Panc1 (cell line): ENCODE measurements at regions of chr17 and their contacts with region 1.

Region 1: DNA sequence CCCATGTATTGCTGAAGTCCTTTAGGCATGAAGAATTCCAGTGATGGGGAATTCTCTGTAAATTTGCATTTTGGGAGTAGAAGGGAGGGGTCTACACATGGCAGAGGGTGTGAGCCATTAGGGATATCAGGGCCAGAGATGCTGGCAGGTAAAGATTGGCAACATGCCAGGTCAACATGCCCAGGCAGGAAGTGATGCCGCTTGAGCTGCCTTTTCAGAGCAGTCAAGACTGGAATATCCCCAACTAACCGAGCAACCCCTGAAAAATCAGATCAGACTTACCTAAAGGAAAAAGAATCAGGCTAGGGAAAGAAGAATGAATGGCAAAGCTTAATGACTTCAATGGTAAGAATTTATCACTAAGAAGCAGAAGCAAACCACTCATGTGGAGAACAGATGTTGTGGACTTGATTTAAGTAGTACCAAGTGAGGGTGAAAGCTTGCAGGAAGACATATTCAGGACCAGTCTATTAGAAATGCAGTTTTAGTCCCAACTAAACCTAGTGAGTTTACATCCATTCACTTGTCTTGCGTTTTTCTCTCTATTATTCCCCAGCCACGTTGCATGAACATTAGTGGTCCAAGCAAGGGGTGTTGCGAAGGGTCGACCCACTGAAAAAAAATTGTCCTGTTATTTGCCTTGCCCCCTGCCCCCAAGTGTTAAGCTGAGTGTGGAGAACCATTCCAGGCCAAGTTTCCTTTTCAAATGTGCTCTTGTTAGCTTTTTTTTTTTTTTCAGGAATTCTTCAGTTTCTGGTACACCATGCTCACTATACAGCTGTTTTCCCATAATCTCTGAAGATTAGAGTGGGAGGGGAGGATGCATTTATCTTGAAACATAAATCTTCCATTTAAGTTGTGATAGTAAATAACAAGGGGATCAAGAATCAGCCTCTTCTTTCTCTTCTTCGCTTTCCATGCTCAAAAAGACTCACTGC is 105.2 kb downstream of the ABCA8 start:
- DNase-seq: no peak
- ATAC-seq: no peak
- H3K4me3 ChIP-seq: no peak overlapping the region
- H3K27ac ChIP-seq: no peak overlapping the region
- H3K4me1 ChIP-seq: no peaks in the 10 kb centered on the region
- H3K27me3 ChIP-seq: no peaks in the 10 kb centered on the region
- CTCF ChIP-seq: no peak

Region 2: DNA sequence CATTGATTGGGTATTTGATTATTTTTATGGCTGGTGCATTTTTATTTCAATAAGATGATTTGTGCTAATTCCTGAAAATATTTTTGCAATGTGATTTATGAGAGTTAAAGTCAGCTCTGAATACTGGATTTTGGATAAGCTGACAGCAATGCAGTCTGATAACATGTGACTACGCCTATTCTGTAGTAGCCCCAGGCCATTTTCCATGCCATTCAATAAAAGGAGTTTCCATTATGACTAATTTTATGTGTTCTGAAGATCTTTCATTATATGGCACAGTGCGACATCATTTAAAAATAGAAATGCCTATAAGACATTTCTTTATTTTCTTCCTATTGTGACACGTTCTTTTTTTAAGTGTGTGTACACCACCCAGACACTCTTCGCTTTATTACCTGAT is 1365.7 kb after region 1 on chr17:
- CTCF ChIA-PET with region 1: interaction called, 12 read pairs
- POLR2A ChIA-PET with region 1: no interaction called
- in situ Hi-C with region 1: no loop called
- intact Hi-C with region 1: no loop called
- DNase-seq: no peak
- ATAC-seq: no peak
- H3K4me3 ChIP-seq: no peak overlapping the region
- H3K27ac ChIP-seq: no peak overlapping the region
- H3K4me1 ChIP-seq: no peaks in the 10 kb centered on the region
- H3K27me3 ChIP-seq: no peaks in the 10 kb centered on the region
- CTCF ChIP-seq: no peak